ENCODE measurements at regions of chr9 and their contacts with region 1.

Region 1: DNA sequence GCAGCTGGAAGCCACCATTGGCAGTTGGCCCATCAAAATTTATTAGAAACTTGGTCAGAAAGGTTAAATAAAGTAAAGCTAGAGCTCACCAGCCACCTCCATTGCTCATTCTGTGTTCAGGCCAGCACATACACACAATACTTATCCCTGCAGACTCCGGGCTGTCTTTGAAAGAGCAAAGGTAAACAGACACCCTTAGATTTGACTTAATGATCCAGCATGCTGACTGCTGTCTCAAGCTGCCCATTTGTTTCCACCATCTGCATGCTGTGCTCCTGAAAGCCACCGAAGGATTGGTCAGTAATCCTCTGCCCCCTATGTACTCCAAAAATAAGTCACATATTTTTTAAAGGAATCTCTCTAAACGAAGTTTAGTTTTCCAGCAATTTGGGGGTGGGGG is 1059.8 kb upstream of the DMAC1 start:
- DNase-seq: no peak
- ATAC-seq: no peak
- H3K4me3 ChIP-seq: no peak overlapping the region
- H3K4me3 Mint-ChIP-seq: peak overlapping the region in 6 of 10 donors; percentile 19 to 61 (median 39)
- H3K27ac ChIP-seq: no peak overlapping the region
- H3K27ac Mint-ChIP-seq: no peak overlapping the region
- H3K4me1 ChIP-seq: no peaks in the 10 kb centered on the region
- H3K4me1 Mint-ChIP-seq: peaks cover 0 to 24% (median 18%) of the 10 kb centered on the region in 7 donors
- H3K27me3 ChIP-seq: peaks cover 0 to 2% of the 10 kb centered on the region in 2 donors
- H3K27me3 Mint-ChIP-seq: peaks cover 49 to 57% (median 55%) of the 10 kb centered on the region in 5 donors

Region 2: DNA sequence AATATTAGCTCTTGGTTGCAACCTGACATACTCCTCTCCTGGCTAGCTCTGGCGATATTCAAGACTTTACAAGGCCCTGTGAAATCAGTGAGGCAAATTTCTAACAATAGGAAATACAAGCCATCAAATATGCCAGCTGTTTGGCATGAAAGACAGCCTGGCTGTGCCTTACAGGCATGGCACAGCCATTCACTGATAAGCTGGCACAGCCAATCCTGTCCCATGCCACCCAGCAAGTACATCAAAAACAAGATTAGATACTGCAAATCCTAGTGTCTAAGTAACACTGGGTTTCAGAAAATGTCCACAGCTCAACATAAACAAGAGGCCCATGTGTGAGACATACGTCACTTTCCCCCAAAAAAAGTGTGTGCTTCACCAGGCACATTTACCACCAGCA is 14.0 kb before region 1 on chr9:
- CTCF ChIA-PET with region 1: interaction called, 10 read pairs
- POLR2A ChIA-PET with region 1: no interaction called
- intact Hi-C with region 1: no loop called
- DNase-seq: no peak
- ATAC-seq: no peak
- H3K4me3 ChIP-seq: no peak overlapping the region
- H3K4me3 Mint-ChIP-seq: no peak overlapping the region
- H3K27ac ChIP-seq: no peak overlapping the region
- H3K27ac Mint-ChIP-seq: no peak overlapping the region
- H3K4me1 ChIP-seq: no peaks in the 10 kb centered on the region
- H3K4me1 Mint-ChIP-seq: no peaks in the 10 kb centered on the region
- H3K27me3 ChIP-seq: no peaks in the 10 kb centered on the region
- H3K27me3 Mint-ChIP-seq: peaks cover 0 to 8% (median 0%) of the 10 kb centered on the region in 5 donors

Region 3: DNA sequence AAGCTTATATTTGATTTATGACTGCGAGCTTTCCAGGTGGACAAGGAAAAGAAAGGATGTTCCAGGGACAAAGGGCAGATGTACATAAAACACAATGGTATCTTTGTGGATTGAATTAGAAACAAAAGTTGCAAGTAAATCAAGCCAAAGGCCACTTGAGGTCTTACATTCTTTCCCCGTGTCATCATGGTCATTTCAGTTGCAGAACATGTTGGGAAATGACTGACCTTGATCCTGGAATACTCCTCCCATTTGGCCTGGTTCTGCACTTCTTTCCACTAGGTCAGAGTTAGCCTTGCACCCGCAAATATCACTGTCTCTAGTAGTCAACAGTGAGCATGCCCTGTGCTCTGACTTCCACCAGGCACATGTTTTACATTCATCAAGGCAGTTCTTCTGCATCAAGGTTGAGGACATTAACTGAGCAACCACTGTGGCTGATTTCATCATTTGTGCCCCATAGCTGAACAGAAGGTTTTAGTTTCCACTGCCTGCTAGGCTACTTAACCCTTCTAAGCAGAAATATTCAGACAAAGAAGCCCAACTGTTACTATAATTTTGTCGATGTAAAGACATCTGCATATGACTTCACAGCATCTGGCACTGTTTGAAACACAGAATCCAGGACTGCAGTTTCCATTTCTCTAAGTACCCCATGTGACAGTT is 101.9 kb after region 1 on chr9:
- CTCF ChIA-PET with region 1: no interaction called
- POLR2A ChIA-PET with region 1: no interaction called
- intact Hi-C with region 1: no loop called
- DNase-seq: no peak
- ATAC-seq: no peak
- H3K4me3 ChIP-seq: no peak overlapping the region
- H3K4me3 Mint-ChIP-seq: no peak overlapping the region
- H3K27ac ChIP-seq: no peak overlapping the region
- H3K27ac Mint-ChIP-seq: no peak overlapping the region
- H3K4me1 ChIP-seq: no peaks in the 10 kb centered on the region
- H3K4me1 Mint-ChIP-seq: no peaks in the 10 kb centered on the region
- H3K27me3 ChIP-seq: no peaks in the 10 kb centered on the region
- H3K27me3 Mint-ChIP-seq: peaks cover 0 to 5% (median 0%) of the 10 kb centered on the region in 5 donors

Region 4: DNA sequence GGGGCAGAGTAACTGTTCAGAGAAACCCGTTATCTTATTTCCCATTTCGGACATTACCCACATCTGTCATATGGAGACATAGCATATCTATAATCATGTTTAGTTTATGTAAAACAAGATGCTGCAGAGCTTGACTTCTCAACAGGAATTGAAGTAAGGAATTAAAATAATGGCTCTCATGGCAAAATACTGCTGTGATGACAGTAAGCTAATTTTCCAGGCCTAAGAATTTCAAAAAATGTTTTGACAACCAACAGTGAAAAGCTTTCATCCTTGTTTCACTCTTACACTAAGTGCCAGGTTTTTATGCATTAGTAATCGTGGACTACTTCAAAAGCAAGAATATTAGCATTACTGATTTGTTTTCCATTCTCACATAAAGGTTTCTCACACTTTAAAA is 1235.1 kb after region 1 on chr9:
- CTCF ChIA-PET with region 1: no interaction called
- POLR2A ChIA-PET with region 1: no interaction called
- intact Hi-C with region 1: no loop called
- DNase-seq: no peak
- ATAC-seq: no peak
- H3K4me3 ChIP-seq: no peak overlapping the region
- H3K4me3 Mint-ChIP-seq: no peak overlapping the region
- H3K27ac ChIP-seq: no peak overlapping the region
- H3K27ac Mint-ChIP-seq: no peak overlapping the region
- H3K4me1 ChIP-seq: no peaks in the 10 kb centered on the region
- H3K4me1 Mint-ChIP-seq: no peaks in the 10 kb centered on the region
- H3K27me3 ChIP-seq: no peaks in the 10 kb centered on the region
- H3K27me3 Mint-ChIP-seq: no peaks in the 10 kb centered on the region

Measured in naive thymus-derived CD4-positive, alpha-beta T cell (primary cell).